ENCODE measurements at regions of chr6 and their contacts with region 1.

Region 1: DNA sequence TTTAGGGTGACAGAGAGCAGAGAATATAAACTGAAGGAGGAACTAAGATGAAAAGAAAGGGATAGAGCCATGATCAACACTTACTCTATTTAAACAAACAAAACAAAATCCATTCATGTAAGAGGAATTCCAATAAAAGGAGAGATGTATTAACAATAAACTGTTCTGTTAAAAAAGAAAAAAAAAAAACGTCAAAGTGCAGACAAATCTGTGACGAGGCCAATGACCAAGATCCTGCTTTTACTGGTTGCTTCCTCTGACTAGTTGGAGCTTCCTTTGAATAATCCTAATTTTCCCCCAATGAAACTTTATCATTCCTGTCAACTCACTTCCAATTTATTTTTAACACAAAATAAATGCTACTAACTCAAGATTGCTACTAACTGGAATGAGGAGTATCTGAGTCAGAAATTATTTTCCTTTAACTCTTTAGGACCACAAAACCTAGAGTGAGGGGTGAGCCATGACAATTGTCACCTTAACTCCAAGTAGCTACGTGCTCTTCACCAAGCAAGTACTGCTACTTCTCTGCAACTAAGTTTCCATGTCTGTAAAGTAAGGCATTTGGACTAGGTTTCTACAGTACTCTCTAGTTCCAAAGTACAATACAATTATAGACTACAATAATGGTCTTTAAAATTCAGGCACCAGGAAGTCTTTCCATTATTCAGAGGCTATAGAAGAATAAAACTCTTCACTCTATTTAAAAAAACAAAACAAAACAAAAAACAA is 152.0 kb downstream of the PTPRK start:
- DNase-seq: peak in 1 of 2 experiments; percentile 44
- H3K4me3 ChIP-seq: no peak overlapping the region
- H3K27ac ChIP-seq: no peak overlapping the region
- H3K4me1 ChIP-seq: peaks cover 13% of the 10 kb centered on the region; the same call in 1 of the 2 replicates
- H3K27me3 ChIP-seq: no peaks in the 10 kb centered on the region
- CTCF ChIP-seq: no peak

Region 2: DNA sequence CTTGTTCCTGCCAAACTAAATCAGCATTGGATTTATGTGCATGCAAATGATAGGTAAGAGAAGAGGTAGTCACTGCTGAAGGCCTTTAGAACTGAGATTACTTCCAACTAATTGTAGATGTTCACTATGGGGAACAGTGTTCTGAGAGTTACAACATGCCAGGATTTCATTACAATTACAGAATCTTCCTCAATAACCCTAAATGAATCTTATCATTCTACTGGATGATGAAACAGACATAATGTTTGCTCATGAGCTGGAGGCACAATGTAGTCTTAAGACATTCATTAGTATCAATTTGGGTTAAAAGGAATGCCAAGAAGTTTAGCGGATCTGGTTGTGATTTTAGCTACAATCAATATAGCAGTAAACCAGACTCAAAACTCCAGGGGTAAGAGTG is 218.6 kb before region 1 on chr6:
- CTCF ChIA-PET with region 1: no interaction called
- POLR2A ChIA-PET with region 1: no interaction called
- intact Hi-C with region 1: no loop called
- DNase-seq: no peak
- H3K4me3 ChIP-seq: no peak overlapping the region
- H3K27ac ChIP-seq: no peak overlapping the region
- H3K4me1 ChIP-seq: no peaks in the 10 kb centered on the region
- H3K27me3 ChIP-seq: no peaks in the 10 kb centered on the region
- CTCF ChIP-seq: no peak

Region 3: DNA sequence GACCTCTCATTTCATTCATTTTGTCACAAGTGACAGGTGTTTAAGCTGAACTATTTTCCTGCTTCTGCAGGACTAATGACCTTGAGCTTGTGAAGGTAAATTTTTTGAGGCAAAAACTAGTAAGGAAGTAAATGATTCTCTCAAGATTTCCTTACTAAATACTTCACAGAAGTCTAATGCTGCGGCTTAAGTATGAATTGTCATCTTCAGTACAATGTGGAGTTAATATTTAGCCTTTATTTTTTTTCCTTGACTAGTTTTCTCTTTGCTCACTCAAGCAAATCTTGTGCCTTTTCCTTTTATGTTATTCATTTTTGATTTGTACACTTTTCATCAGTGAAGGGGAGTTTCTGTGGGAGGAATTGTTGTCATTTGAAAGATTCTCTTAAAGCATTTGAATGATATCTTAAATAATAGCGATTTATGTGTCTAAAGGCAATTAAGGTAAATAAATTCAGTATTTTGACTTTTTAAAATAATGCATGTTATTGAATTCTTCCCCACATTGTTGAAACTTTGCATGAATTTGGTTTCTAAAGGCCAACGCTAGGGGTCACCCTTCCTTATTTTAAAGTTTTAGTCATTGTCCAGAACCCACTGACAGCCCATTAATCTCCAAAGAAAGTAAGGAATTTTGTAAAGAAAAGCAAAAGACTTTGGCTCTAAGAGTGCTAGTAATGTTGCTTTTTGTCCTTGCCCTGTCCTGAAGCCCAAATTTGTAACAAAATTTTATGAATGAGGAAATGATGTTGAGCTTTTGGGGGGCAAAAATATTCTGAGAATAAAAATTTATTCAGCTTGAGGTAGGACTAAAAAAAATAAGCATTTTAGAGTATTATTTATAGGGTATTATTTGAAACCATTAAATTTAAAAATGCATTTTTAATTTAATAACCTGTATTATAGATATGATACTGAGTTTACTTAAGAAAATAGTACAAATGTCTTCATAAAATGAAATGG is 357.2 kb after region 1 on chr6:
- CTCF ChIA-PET with region 1: no interaction called
- POLR2A ChIA-PET with region 1: no interaction called
- intact Hi-C with region 1: loop called (anchors 10 kb)
- DNase-seq: peak in 1 of 2 experiments; percentile 3
- H3K4me3 ChIP-seq: no peak overlapping the region
- H3K27ac ChIP-seq: no peak overlapping the region
- H3K4me1 ChIP-seq: no peaks in the 10 kb centered on the region
- H3K27me3 ChIP-seq: no peaks in the 10 kb centered on the region
- CTCF ChIP-seq: peak; percentile 87